ENCODE measurements at regions of chr12 and their contacts with region 1.

Region 1: GRCh38 chr12:118372541-118373495 is at the start of gene TAOK3:
- DNase-seq: peak; percentile 89 to 99
- ATAC-seq: peak; percentile 76 to 94
- H3K4me3 ChIP-seq: peak within 1 kb of the TSS; percentile 74
- H3K27ac ChIP-seq: peak within 1 kb of the TSS; percentile 83 to 89
- H3K4me1 ChIP-seq: peaks cover 19% of the 10 kb centered on the region
- CTCF ChIP-seq: no peak
- EP300 ChIP-seq: no peak
- POLR2A ChIP-seq: peak; percentile 85
- RAD21 ChIP-seq: 0 out of 5 replicates have a peak, but pooled peaks of 1 of the 2 experiments have one; percentile 13
- polyA plus RNA-seq, gene TAOK3: 27.6 and 32.4 TPM in 2 replicates

Region 2: DNA sequence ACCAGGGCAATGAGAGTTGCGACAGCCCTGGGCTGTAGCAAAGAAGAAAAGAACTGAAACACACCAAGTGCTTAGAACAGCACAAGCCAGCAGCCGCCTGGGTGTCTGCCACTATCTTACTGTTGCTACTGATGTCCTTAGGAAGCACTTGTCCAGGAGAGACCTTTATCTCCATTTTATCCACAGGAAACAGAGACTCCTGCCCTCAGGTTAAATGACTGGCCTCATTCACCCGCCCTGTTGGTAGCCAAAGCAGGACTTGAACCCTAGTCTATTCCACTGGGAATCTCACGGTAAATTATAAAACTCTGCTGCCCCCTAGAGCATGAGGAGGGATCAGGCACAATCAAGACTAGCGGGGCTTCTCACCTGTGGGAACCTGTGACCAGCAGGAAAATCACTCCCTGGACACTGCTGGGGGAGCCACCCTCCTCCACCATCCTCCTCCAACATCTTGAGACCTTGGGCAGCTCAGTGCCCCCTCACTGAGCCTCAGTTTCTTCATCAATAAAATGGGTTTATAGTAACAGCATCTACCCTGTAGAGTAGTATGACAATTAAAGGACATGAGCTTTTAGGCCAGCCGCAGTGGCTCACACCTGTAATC is 1253.1 kb before region 1 on chr12:
- CTCF ChIA-PET with region 1: no interaction called
- POLR2A ChIA-PET with region 1: no interaction called
- DNase-seq: peak; percentile 56 to 72
- ATAC-seq: peak; percentile 72 to 86
- H3K4me3 ChIP-seq: no peak overlapping the region
- H3K27ac ChIP-seq: peak overlapping the region in 1 of 2 experiments; percentile 78; a peak in 3 of 6 replicates
- H3K4me1 ChIP-seq: peaks cover 40% of the 10 kb centered on the region
- CTCF ChIP-seq: peak; percentile 79
- EP300 ChIP-seq: no peak
- POLR2A ChIP-seq: no peak
- RAD21 ChIP-seq: peak; percentile 79 to 89

Region 3: DNA sequence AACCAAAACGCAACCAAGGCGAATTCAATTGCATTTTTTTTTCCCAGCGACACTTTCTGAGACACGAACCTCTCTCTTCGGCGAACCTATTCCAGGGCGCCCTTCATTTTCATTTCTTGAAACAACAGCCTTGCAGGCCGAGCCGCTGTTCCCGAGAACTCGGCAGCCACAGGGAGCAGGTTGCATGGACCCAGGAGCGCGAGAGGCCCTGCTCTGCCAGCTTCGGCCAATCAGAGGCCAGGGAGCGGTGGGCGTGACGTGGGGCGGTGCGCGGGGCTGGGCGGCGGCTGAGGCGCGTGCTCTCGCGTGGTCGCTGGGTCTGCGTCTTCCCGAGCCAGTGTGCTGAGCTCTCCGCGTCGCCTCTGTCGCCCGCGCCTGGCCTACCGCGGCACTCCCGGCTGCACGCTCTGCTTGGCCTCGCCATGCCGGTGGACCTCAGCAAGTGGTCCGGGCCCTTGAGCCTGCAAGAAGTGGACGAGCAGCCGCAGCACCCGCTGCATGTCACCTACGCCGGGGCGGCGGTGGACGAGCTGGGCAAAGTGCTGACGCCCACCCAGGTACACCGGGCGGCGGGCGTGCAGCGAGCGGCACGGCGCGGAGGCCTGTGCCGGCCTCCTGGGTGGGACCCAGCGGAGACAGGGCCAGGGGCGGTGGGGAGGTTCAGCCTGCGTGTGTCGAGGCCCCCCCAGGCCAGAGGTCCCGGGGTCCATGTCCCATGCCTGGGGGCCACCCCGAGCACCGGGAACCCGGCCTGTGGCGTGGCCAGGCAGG is 236.8 kb before region 1 on chr12 and contains the start of gene PEBP1:
- CTCF ChIA-PET with region 1: interaction called, 12 read pairs
- POLR2A ChIA-PET with region 1: interaction called, 16 read pairs
- DNase-seq: peak; percentile 96
- ATAC-seq: peak; percentile 99
- H3K4me3 ChIP-seq: peak within 1 kb of the TSS; percentile 95
- H3K27ac ChIP-seq: peak within 1 kb of the TSS; percentile 90 to 96
- H3K4me1 ChIP-seq: peaks cover 25% of the 10 kb centered on the region
- CTCF ChIP-seq: no peak
- EP300 ChIP-seq: no peak
- POLR2A ChIP-seq: peak; percentile 87
- RAD21 ChIP-seq: no peak
- polyA plus RNA-seq, gene PEBP1: 152 and 169 TPM in 2 replicates

Region 4: DNA sequence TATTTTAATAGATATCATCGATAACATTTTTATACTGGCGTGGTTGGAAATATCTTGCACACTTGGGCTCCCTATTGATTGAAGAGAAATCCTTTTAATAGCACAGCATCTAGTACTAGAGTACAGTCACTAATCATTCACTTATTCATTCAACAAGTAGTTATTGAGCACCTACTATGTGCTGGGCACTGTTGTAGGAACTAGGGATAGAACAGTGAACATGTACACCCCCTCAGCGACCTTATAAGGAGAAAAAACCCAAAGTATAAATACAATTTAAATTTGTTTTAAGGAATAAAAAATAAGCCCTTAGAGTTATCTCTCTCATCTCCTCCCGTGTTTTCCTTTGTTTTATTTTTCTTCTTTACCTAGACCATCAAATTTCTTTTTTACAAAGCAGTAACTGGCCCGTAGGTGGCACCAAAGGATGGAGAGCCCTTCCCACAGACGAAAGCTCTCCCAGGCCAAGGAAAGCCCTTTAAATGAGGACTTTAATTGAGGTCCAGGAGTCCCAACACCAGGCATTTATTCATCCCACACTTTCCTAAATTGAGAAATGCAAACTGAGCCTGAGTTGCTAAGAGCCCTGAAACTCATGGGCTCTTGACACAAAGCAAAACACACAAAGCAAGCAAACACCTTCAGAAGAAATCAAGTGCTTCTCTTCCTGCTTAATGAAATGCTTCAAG is 207.9 kb before region 1 on chr12:
- CTCF ChIA-PET with region 1: interaction called, 61 read pairs
- POLR2A ChIA-PET with region 1: interaction called, 4 read pairs
- DNase-seq: peak; percentile 48 to 51
- ATAC-seq: peak; percentile 87 to 89
- H3K4me3 ChIP-seq: no peak overlapping the region
- H3K27ac ChIP-seq: no peak overlapping the region
- H3K4me1 ChIP-seq: no peaks in the 10 kb centered on the region
- CTCF ChIP-seq: peak; percentile 68
- EP300 ChIP-seq: no peak
- POLR2A ChIP-seq: no peak
- RAD21 ChIP-seq: peak; percentile 70 to 82

Region 5: GRCh38 chr12:118187751-118188435 is 184.9 kb before region 1 on chr12:
- CTCF ChIA-PET with region 1: interaction called, 193 read pairs
- POLR2A ChIA-PET with region 1: interaction called, 4 read pairs
- DNase-seq: no peak
- ATAC-seq: no peak
- H3K4me3 ChIP-seq: no peak overlapping the region
- H3K27ac ChIP-seq: no peak overlapping the region
- H3K4me1 ChIP-seq: no peaks in the 10 kb centered on the region
- CTCF ChIP-seq: no peak
- EP300 ChIP-seq: no peak
- POLR2A ChIP-seq: no peak
- RAD21 ChIP-seq: no peak

Region 6: GRCh38 chr12:118346895-118347294 is 25.9 kb before region 1 on chr12:
- CTCF ChIA-PET with region 1: interaction called, 26 read pairs
- POLR2A ChIA-PET with region 1: no interaction called
- DNase-seq: no peak
- ATAC-seq: no peak
- H3K4me3 ChIP-seq: no peak overlapping the region
- H3K27ac ChIP-seq: no peak overlapping the region
- H3K4me1 ChIP-seq: peaks cover 6% of the 10 kb centered on the region; the same call in 2 of the 3 replicates
- CTCF ChIP-seq: no peak
- EP300 ChIP-seq: no peak
- POLR2A ChIP-seq: no peak
- RAD21 ChIP-seq: no peak

Region 7: DNA sequence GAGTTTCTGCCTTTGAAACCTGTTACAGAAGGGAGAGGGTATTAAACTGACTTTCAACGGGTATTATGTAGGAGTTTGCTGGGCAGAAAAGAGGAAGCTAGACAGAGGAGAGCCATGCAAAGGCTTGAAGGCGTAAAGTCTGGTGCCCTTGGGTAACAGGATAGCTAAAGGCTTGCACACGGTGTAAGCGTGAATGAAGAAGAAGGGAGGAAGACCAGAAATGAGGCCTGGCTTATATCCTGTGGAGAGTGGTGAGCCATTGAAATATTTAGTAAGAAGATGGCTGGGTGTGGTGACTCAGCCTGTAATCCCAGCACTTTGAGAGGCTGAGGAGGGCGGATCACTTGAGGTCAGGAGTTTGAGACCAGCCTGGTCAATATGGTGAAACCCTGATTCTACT is 26.1 kb after region 1 on chr12:
- CTCF ChIA-PET with region 1: interaction called, 75 read pairs
- POLR2A ChIA-PET with region 1: no interaction called
- DNase-seq: no peak
- ATAC-seq: no peak
- H3K4me3 ChIP-seq: no peak overlapping the region
- H3K27ac ChIP-seq: no peak overlapping the region
- H3K4me1 ChIP-seq: no peaks in the 10 kb centered on the region
- CTCF ChIP-seq: no peak
- EP300 ChIP-seq: no peak
- POLR2A ChIP-seq: no peak
- RAD21 ChIP-seq: no peak

Region 8: DNA sequence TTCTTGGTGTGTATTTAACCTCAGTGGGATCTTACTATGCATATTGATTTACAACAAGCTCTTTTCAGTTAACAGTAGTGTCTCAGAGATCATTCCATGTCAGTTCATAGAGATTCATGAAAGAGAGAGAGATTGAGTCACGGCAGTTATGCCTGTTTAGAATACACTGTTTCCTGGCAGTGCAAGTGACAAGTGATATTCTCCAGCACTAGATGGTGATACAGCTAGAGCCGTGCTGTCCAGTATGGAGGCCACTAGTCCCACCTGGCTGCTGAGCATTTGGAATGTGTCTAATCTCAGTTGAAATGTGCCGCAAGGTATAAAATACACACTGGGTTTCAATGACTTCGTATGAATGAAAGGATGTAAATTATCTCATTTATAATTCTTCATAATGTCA is 187.9 kb after region 1 on chr12:
- CTCF ChIA-PET with region 1: no interaction called
- POLR2A ChIA-PET with region 1: no interaction called
- DNase-seq: no peak
- ATAC-seq: no peak
- H3K4me3 ChIP-seq: no peak overlapping the region
- H3K27ac ChIP-seq: no peak overlapping the region
- H3K4me1 ChIP-seq: no peaks in the 10 kb centered on the region
- CTCF ChIP-seq: no peak
- EP300 ChIP-seq: no peak
- POLR2A ChIP-seq: no peak
- RAD21 ChIP-seq: no peak